GM12878 (cell line): ENCODE measurements at regions of chr19 and their contacts with region 1.

Region 1: DNA sequence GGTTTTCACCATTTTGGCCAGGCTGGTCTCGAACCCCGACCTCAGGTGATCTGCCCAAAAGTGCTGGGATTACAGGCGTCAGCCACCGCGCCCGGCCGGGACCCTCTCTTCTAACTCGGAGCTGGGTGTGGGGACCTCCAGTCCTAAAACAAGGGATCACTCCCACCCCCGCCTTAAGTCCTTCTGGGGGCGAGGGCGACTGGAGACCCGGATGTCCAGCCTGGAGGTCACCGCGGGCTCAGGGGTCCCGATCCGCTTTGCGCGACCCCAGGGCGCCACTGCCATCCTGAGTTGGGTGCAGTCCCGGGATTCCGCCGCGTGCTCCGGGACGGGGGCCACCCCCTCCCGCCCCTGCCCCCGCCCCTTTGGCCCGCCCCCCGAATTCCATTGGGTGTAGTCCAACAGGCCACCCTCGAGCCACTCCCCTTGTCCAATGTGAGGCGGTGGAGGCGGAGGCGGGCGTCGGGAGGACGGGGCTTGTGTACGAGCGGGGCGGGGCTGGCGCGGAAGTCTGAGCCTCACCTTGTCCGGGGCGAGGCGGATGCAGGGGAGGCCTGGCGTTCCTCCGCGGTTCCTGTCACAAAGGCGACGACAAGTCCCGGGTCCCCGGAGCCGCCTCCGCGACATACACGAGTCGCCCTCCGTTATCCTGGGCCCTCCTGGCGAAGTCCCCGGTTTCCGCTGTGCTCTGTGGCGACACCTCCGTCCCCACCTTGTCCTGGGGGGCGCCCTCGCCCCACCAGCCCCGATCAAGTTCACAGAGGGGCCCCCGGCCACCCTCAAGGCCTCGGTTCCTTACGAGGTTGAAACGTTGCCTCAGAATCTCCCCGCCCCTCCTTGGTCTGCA is 1.0 kb downstream of the LDLR start:
- DNase-seq: peak; percentile 76
- ATAC-seq: peak; percentile 88
- H3K4me3 ChIP-seq: peak overlapping the region; percentile 97
- H3K27ac ChIP-seq: peak overlapping the region; percentile 91
- H3K4me1 ChIP-seq: peaks cover 35% of the 10 kb centered on the region
- H3K27me3 ChIP-seq: no peaks in the 10 kb centered on the region
- CTCF ChIP-seq: peak in 2 of 3 experiments; percentile 12 to 16; a peak in 1 of 6 replicates
- EP300 ChIP-seq: no peak
- POLR2A ChIP-seq: peak; percentile 96
- RAD21 ChIP-seq: no peak

Region 2: DNA sequence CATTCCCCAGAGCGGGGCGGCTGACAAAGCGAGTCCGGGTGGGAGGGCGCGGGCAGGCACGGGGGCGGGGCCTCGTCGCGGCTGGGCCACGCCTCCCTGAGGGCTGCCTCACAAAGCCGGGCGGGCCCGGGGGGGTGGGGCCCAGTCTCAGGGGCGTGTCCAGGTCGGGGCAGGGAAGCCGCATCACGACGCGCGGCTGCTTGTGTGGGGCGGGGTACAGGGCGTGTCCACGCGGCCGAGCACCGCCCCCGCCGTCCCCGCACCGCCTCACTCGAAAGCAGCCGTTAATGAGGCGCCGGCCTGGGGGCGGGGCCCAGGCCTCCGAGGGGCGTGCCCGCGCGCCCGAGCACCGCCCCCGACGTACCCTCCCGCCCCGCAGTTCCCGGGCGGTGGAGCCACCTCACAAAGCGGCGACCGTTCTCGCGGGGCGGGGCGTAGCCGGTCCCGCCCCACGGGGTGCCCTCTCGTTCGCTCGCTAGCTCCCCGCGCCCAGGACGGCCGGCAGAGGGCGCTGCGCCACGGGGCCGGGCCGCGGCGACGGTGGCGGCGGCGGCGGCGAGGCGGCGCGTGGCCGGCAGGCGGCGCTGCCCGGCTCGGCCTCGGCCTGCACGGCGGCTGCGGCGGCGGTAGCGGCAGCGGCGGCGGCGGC is 219.2 kb before region 1 on chr19 and contains the start of gene CARM1:
- CTCF ChIA-PET with region 1: interaction called, 4 read pairs
- POLR2A ChIA-PET with region 1: interaction called, 6 read pairs
- RAD21 ChIA-PET with region 1: interaction called, 15 read pairs
- SMC1A ChIA-PET with region 1: no interaction called
- in situ Hi-C with region 1: no loop called
- intact Hi-C with region 1: loop called (anchors 5 kb)
- DNase-seq: peak; percentile 79
- ATAC-seq: peak; percentile 84
- H3K4me3 ChIP-seq: peak within 1 kb of the TSS; percentile 68
- H3K27ac ChIP-seq: peak within 1 kb of the TSS; percentile 90
- H3K4me1 ChIP-seq: peaks cover 33% of the 10 kb centered on the region
- H3K27me3 ChIP-seq: no peaks in the 10 kb centered on the region
- CTCF ChIP-seq: peak; percentile 55 to 90 (median 66)
- EP300 ChIP-seq: no peak
- POLR2A ChIP-seq: no peak
- RAD21 ChIP-seq: peak; percentile 72
- polyA plus RNA-seq, gene CARM1: 0.45 to 0.49 TPM

Region 3: GRCh38 chr19:10876459-10877240 is 213.6 kb before region 1 on chr19:
- CTCF ChIA-PET with region 1: interaction called, 3 read pairs
- POLR2A ChIA-PET with region 1: interaction called, 6 read pairs
- RAD21 ChIA-PET with region 1: interaction called, 15 read pairs
- SMC1A ChIA-PET with region 1: no interaction called
- in situ Hi-C with region 1: no loop called
- intact Hi-C with region 1: loop called (anchors 5 kb)
- DNase-seq: peak; percentile 79
- ATAC-seq: peak; percentile 80
- H3K4me3 ChIP-seq: peak overlapping the region; percentile 60
- H3K27ac ChIP-seq: peak overlapping the region; percentile 97
- H3K4me1 ChIP-seq: peaks cover 57% of the 10 kb centered on the region
- H3K27me3 ChIP-seq: no peaks in the 10 kb centered on the region
- CTCF ChIP-seq: no peak
- EP300 ChIP-seq: peak; percentile 61 to 96; a peak in 3 of 4 replicates
- POLR2A ChIP-seq: peak; percentile 64; the same call in 1 of the 2 replicates
- RAD21 ChIP-seq: no peak

Region 4: DNA sequence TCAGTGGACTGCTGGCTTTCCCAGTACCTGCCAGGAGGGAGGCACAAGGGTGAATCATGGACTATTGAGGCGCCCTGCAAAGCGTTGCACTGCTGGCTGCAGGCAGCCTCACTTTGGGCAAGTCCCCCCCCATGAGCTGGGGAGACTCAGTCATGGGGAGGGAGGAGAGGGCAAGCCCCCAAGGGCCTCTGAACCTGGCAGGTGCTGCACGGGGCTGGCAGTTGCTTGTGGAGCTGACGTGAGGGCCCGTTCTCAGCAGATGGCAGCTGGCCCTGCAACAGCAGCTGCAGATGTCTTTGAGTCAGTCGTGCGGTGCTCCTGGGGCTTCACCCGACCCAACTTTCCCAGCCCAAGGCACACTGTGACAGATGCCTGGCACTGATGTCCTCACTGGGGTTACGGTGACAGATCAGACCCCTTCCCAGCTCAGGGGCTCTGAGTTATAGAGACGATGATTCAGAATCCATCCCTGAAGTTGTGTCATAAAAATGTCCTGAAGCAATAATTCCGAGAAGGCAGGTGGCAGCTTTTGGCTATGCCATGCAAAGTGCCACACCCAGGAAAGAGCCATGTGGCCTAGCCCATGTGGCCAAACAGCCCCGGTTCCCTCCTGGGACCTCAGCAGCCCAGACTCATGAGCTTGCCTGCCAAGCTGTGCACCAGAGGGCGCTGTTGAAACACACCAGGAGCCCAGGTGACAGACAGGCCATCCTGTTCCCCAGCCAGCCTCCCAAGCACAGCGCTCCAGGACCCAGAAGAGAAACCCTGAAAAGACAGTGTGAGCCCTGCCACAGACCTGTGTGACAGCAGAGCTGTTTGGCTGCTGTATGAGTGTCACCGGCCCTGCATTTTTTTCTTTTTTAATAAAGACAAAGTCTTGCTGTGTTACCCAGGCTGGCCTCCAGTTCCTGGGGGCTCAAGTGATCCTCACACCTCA is 54.6 kb before region 1 on chr19:
- CTCF ChIA-PET with region 1: interaction called, 10 read pairs
- POLR2A ChIA-PET with region 1: interaction called, 7 read pairs
- RAD21 ChIA-PET with region 1: interaction called, 10 read pairs
- SMC1A ChIA-PET with region 1: interaction called, 13 read pairs
- in situ Hi-C with region 1: no loop called
- intact Hi-C with region 1: loop called (anchors 2 kb)
- DNase-seq: peak; percentile 71
- ATAC-seq: peak; percentile 99
- H3K4me3 ChIP-seq: no peak overlapping the region
- H3K27ac ChIP-seq: no peak overlapping the region; the same call in 1 of the 2 replicates
- H3K4me1 ChIP-seq: peaks cover 4% of the 10 kb centered on the region; the same call in 1 of the 2 replicates
- H3K27me3 ChIP-seq: no peaks in the 10 kb centered on the region
- CTCF ChIP-seq: peak; percentile 93 to 99 (median 97); a peak in 5 of 6 replicates
- EP300 ChIP-seq: no peak
- POLR2A ChIP-seq: peak; percentile 44; the same call in 1 of the 2 replicates
- RAD21 ChIP-seq: peak; percentile 92

Region 5: DNA sequence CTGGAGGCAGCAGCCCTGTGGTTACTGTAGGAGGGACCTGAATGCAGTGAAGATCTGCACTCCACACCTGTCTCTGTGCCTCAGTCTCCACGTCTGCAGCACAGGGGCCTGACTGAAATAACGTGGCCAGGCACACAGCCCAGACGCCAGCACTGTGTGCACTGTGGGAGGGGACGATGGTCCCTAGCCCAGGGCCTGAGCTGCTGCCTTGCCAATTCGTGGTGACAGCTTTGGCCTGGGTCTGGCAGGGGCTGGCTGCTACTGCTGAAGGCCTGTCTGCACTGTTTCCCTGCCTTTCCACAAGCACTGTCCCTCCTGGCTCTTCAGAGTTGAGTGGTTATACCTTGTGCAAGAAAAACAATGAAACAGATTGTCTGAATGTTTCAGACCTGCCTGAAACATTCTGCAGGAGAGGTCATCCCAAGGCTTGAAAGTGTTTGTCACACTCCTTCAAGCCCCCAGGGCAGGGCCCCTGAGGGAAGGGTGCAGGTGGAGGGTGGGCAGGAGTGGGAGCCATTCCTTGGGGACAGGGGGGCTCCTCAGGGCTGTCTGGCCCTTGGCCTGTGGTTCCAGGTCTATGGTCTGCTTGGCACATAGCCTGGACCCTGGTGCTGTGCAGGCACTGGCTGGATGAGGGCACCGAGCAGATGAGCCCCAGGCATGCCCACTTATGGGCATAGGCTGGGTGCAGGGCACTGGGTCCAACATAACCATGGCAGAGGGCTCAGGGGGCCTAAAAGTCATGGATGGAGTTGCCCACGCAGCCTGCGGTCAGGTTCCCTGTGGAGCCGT is 39.8 kb before region 1 on chr19:
- CTCF ChIA-PET with region 1: interaction called, 4 read pairs
- POLR2A ChIA-PET with region 1: interaction called, 3 read pairs
- RAD21 ChIA-PET with region 1: interaction called, 3 read pairs
- SMC1A ChIA-PET with region 1: interaction called, 3 read pairs
- in situ Hi-C with region 1: no loop called
- intact Hi-C with region 1: loop called (anchors 1 kb)
- DNase-seq: no peak
- ATAC-seq: no peak
- H3K4me3 ChIP-seq: no peak overlapping the region
- H3K27ac ChIP-seq: peak overlapping the region; percentile 71
- H3K4me1 ChIP-seq: peaks cover 58% of the 10 kb centered on the region
- H3K27me3 ChIP-seq: no peaks in the 10 kb centered on the region
- CTCF ChIP-seq: no peak
- EP300 ChIP-seq: no peak
- POLR2A ChIP-seq: no peak
- RAD21 ChIP-seq: no peak

Region 6: DNA sequence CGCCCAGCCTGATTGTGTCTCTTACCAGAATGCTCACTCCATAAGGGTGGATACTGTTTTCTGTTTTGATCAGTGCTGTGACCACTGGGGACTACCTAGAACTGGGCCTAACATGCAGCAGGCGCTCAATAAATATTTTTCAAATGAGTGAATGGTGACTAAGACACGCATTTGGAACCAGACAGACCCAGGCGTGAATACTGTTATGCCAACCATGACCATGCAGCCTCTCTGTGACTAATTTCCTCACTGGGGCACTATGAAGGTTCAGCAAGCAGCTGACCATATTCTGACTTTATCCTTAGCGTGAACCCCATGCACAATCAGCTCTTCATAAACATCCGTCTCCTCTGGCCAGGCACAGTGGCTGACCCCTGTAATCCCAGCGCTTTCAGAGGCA is 78.3 kb after region 1 on chr19:
- CTCF ChIA-PET with region 1: no interaction called
- POLR2A ChIA-PET with region 1: no interaction called
- RAD21 ChIA-PET with region 1: no interaction called
- SMC1A ChIA-PET with region 1: no interaction called
- in situ Hi-C with region 1: no loop called
- intact Hi-C with region 1: no loop called
- DNase-seq: no peak
- ATAC-seq: peak; percentile 74
- H3K4me3 ChIP-seq: no peak overlapping the region
- H3K27ac ChIP-seq: no peak overlapping the region
- H3K4me1 ChIP-seq: no peaks in the 10 kb centered on the region
- H3K27me3 ChIP-seq: no peaks in the 10 kb centered on the region
- CTCF ChIP-seq: no peak
- EP300 ChIP-seq: no peak
- POLR2A ChIP-seq: no peak
- RAD21 ChIP-seq: no peak

Region 7: GRCh38 chr19:11234486-11235075 is 144.3 kb after region 1 on chr19:
- CTCF ChIA-PET with region 1: no interaction called
- POLR2A ChIA-PET with region 1: no interaction called
- RAD21 ChIA-PET with region 1: no interaction called
- SMC1A ChIA-PET with region 1: no interaction called
- in situ Hi-C with region 1: no loop called
- intact Hi-C with region 1: no loop called
- DNase-seq: no peak
- ATAC-seq: no peak
- H3K4me3 ChIP-seq: no peak overlapping the region
- H3K27ac ChIP-seq: no peak overlapping the region
- H3K4me1 ChIP-seq: no peaks in the 10 kb centered on the region
- H3K27me3 ChIP-seq: no peaks in the 10 kb centered on the region
- CTCF ChIP-seq: no peak
- EP300 ChIP-seq: no peak
- POLR2A ChIP-seq: no peak
- RAD21 ChIP-seq: no peak